ENCODE measurements at regions of chr9 and their contacts with region 1.

Region 1: GRCh38 chr9:70602321-70603019 is 188.0 kb upstream of the KLF9 start:
- DNase-seq: peak; percentile 60
- ATAC-seq: peak; percentile 78
- H3K4me3 Mint-ChIP-seq: no peak overlapping the region
- H3K27ac Mint-ChIP-seq: no peak overlapping the region
- H3K4me1 Mint-ChIP-seq: no peaks in the 10 kb centered on the region
- H3K27me3 Mint-ChIP-seq: no peaks in the 10 kb centered on the region

Region 2: GRCh38 chr9:70111042-70111602 is 491.3 kb before region 1 on chr9:
- CTCF ChIA-PET with region 1: interaction called, 5 read pairs
- POLR2A ChIA-PET with region 1: no interaction called
- intact Hi-C with region 1: loop called in 1 of 2 experiments (anchors 2 kb)
- DNase-seq: peak; percentile 78
- ATAC-seq: peak; percentile 55
- H3K4me3 Mint-ChIP-seq: no peak overlapping the region
- H3K27ac Mint-ChIP-seq: no peak overlapping the region
- H3K4me1 Mint-ChIP-seq: peaks cover 12% of the 10 kb centered on the region
- H3K27me3 Mint-ChIP-seq: peaks cover 13% of the 10 kb centered on the region

Region 3: GRCh38 chr9:70340572-70340971 is 261.9 kb before region 1 on chr9:
- CTCF ChIA-PET with region 1: interaction called, 63 read pairs
- POLR2A ChIA-PET with region 1: no interaction called
- intact Hi-C with region 1: loop called (anchors 1 kb)
- DNase-seq: no peak
- ATAC-seq: no peak
- H3K4me3 Mint-ChIP-seq: no peak overlapping the region
- H3K27ac Mint-ChIP-seq: no peak overlapping the region
- H3K4me1 Mint-ChIP-seq: no peaks in the 10 kb centered on the region
- H3K27me3 Mint-ChIP-seq: no peaks in the 10 kb centered on the region

Region 4: DNA sequence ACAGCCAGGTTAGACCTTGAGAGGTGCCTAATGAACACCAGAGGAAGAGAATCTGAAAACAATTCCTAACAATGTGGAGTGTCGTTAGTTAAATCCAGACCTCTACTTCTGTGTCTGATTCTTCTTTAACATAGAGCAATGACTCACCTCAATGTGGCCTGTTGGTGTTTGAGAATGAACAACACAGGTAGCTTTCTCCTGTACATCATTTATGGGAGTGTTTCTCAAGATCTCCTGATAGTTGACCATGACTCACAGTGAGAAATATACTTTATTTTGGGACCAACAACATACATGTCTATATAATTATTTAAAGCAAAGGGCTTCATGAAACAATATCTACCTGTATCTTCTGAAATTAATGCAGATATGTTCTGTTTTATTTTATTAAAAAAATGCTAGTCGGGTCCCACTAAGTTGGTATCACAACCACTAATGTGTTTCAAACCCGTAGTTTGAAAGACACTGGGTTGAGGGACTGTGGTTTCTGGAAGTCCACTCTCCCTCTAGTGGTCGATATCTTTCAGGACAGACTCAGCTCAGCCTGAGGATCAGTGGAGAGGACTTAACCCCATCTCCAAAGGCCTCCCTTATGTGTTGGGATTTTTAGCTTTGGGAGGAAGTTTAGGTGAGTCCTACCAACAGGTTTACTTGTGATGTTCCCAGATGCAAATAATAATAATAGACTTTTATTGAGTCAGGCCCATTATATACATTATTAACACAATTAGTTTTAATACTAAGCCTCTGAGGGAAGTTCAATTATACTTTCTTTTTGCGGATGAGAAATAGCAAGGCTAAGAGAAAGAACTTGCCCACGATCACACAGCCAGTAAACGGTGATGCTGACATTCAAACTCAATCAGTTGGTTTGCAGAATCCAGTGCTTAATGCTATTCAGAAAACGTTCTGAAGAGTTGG is 118.0 kb before region 1 on chr9:
- CTCF ChIA-PET with region 1: interaction called, 6 read pairs
- POLR2A ChIA-PET with region 1: no interaction called
- intact Hi-C with region 1: loop called in 1 of 2 experiments (anchors 5 kb)
- DNase-seq: no peak
- ATAC-seq: peak; percentile 63
- H3K4me3 Mint-ChIP-seq: no peak overlapping the region
- H3K27ac Mint-ChIP-seq: no peak overlapping the region
- H3K4me1 Mint-ChIP-seq: peaks cover 9% of the 10 kb centered on the region
- H3K27me3 Mint-ChIP-seq: no peaks in the 10 kb centered on the region

Region 5: GRCh38 chr9:70542311-70542931 is 60.0 kb before region 1 on chr9:
- CTCF ChIA-PET with region 1: no interaction called
- POLR2A ChIA-PET with region 1: no interaction called
- intact Hi-C with region 1: loop called in 1 of 2 experiments (anchors 5 kb)
- DNase-seq: no peak
- ATAC-seq: no peak
- H3K4me3 Mint-ChIP-seq: no peak overlapping the region
- H3K27ac Mint-ChIP-seq: no peak overlapping the region
- H3K4me1 Mint-ChIP-seq: no peaks in the 10 kb centered on the region
- H3K27me3 Mint-ChIP-seq: no peaks in the 10 kb centered on the region

Region 6: GRCh38 chr9:70614786-70615463 is 12.5 kb after region 1 on chr9:
- CTCF ChIA-PET with region 1: interaction called, 22 read pairs
- POLR2A ChIA-PET with region 1: no interaction called
- intact Hi-C with region 1: no loop called
- DNase-seq: no peak
- ATAC-seq: no peak
- H3K4me3 Mint-ChIP-seq: no peak overlapping the region
- H3K27ac Mint-ChIP-seq: no peak overlapping the region
- H3K4me1 Mint-ChIP-seq: no peaks in the 10 kb centered on the region
- H3K27me3 Mint-ChIP-seq: no peaks in the 10 kb centered on the region